Activated T-helper 2 cell treated with anti-CD3 and anti-CD28 coated beads, Interferon-gamma antibody, Interleukin-2, Interleukin-4, amounts not matched to agents 10 μg/mL and 5 μg/mL and 100 μg/mL, durations not matched to agents 14 hours and 24 hours and 36 hours (primary cell): ENCODE measurements at regions of chr11 and their contacts with region 1.

Region 1: DNA sequence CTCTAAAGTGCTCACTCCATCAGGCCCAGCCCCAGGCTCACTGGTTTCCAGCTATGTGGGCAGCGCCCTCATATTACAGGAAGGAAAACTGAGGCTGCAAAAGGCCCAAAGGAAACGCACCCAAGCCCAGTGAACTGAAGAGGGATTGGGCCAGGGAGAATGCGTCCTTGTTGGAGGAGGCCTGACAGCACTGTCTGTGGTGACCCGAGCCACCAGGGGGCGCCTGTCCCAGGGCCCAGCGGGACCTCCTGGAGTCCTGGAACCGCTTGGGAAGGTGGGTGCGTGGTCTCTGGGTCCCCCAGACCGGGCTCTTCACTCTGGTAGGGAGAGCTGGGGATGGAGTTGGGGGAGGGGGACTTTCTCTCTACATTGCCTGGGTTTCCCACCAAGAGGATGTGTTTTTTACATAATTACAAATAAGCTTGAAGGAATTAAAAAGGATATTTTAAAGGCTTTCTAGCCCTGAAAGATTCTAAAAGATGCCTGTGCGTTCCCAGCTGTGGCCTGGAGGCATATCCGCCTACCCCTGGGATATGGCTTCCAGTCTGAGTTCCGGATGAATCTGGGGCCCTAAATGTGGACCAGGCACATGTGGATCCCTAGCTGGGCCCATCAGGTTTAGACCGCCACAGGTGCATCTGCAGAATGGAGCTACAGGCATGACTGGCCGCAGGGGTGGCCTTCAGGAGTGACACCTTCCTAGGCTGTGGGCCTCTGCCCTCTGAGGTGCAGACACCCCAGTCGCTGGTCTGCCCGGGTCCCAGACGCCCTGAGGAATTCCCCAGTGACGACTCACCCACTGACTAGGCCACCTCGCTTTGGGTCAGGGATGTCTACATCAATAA is 4.2 kb downstream of the SPI1 start:
- DNase-seq: peak; percentile 71
- H3K4me3 Mint-ChIP-seq: no peak overlapping the region
- H3K27ac Mint-ChIP-seq: peak overlapping the region; percentile 11
- H3K4me1 Mint-ChIP-seq: peaks cover 19% of the 10 kb centered on the region
- H3K27me3 Mint-ChIP-seq: no peaks in the 10 kb centered on the region

Region 2: DNA sequence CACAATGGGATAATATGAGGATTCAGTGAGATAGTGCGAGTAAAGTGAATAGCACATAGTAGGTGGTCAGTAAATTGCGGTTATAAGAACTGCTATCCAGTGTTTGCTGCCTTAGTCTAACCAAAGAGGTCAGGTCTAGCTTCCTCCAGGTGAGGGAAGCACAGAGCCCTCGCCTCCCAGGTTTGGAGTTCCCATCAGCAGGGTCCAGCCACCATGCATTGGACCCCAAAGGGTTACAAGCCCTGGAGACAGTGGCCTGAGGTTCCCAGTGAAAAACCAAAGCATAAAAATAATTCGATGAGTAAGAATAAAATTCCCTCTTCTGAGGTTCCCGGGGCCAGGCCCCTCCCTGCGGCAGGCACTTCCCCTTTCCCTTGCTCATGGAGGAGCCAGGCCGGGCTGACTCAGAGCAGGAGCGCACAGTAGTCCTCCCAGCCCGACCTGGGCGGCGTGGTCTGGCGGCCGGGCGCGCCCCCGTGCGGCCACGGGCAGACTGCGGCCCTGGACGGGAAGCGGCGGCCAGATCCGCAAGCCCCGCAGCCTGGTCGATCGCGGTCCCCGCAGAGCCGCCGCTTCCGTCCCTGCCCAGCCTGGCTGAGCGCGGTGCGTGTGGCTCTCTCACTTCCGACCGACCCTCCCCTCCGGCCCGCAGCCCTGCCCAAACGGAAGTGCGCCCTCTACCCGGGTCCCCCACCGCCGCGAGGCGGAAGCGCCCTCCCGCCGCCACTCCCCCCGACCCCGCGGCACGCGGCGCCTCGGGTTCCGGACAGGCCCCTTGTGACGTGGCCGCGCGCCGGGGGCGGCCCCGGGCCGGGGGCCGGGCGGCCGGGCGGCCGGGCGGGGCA is 33.9 kb after region 1 on chr11 and contains the start of gene SLC39A13:
- intact Hi-C with region 1: loop called (anchors 1 kb)
- DNase-seq: peak; percentile 93
- H3K4me3 Mint-ChIP-seq: peak within 1 kb of the TSS; percentile 96
- H3K27ac Mint-ChIP-seq: peak within 1 kb of the TSS; percentile 89
- H3K4me1 Mint-ChIP-seq: peaks cover 17% of the 10 kb centered on the region
- H3K27me3 Mint-ChIP-seq: no peaks in the 10 kb centered on the region
- total RNA-seq, gene SLC39A13: 12.5 and 15.2 TPM in 2 replicates

Region 3: GRCh38 chr11:47454180-47454644 is 80.1 kb after region 1 on chr11:
- intact Hi-C with region 1: loop called (anchors 1 kb)
- DNase-seq: peak; percentile 59
- H3K4me3 Mint-ChIP-seq: no peak overlapping the region
- H3K27ac Mint-ChIP-seq: peak overlapping the region; percentile 3
- H3K4me1 Mint-ChIP-seq: peaks cover 4% of the 10 kb centered on the region
- H3K27me3 Mint-ChIP-seq: no peaks in the 10 kb centered on the region

Region 4: DNA sequence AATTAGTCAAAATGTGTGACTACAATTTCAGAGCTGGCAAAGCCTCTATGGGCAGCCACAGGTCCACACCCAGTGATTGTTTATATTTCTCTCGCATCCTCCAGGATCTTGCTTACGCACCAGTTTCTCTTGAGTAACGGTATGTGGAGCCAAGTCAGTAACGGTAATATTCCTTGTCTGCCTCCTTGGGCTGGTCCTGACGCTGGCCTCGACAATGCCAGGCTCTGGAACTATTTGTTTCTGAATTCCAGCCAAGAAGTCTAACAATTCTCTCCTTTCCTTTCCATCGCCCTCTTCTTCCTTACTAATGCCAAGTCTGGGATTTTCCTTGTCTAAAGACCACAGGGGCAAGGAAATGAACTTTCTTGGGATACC is 484.1 kb after region 1 on chr11:
- intact Hi-C with region 1: loop called (anchors 10 kb)
- DNase-seq: no peak
- H3K4me3 Mint-ChIP-seq: no peak overlapping the region
- H3K27ac Mint-ChIP-seq: no peak overlapping the region
- H3K4me1 Mint-ChIP-seq: peaks cover 10% of the 10 kb centered on the region
- H3K27me3 Mint-ChIP-seq: no peaks in the 10 kb centered on the region